Upper lobe of right lung (tissue), 1 donor: ENCODE measurements at regions of chr5 and their contacts with region 1.

Region 1: DNA sequence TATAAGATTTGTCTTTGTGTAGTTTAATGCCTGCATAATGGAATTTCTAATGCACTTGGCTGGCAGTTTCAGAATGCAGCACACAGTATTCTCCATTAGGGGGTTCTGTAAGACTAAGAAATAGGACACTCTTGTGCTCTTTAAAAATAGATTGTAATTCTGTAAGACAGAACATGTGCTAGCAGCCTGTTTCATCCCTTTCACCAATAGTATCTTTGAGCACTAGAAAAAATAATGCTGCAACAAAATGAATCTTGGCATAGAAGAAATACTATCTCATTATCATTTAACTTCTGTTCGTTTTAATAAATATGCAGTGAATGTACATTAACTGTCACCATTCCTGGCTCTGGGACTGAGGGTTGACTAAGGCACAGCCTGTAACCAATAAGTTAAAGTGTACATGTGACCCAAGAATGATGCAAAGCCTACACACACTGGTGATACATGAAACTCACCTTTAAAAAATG is 23.8 kb upstream of the ZNF622 start:
- DNase-seq: no peak
- ATAC-seq: peak; percentile 76
- H3K4me3 ChIP-seq: no peak overlapping the region
- H3K27ac ChIP-seq: no peak overlapping the region
- H3K4me1 ChIP-seq: no peaks in the 10 kb centered on the region
- H3K27me3 ChIP-seq: no peaks in the 10 kb centered on the region
- CTCF ChIP-seq: peak; percentile 70

Region 2: DNA sequence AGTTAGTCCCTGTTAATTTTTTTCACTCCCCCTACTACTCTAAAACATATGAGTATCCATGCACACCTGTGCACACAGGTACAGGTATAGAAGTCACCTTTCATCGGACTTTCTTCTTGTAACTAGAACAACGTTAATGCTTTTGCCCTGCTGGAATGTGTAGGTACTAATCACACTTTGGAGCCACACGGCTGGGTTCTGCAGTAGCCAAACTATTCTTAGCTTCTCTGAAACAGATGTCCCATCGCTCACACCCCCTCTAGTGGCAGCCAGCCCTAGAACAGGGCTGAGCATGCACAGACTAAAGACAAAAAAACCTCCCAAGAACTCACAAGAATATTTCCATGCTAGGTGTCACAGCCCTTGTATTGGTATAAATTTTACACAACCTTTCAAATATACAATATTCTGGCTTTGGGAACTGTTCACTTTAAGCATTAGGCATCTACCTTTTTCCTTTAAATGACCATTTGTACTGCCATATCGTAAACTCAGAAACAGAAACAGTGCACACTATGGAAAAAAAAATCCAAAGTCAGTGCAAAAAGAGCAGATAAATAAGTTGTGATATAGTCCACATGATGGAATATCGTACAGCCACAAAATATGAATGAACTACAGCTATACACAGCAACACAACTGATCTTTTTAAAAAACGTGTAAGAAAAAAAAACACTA is 63.4 kb after region 1 on chr5:
- intact Hi-C with region 1: loop called (anchors 10 kb)
- DNase-seq: peak; percentile 79
- ATAC-seq: peak; percentile 94
- H3K4me3 ChIP-seq: no peak overlapping the region
- H3K27ac ChIP-seq: no peak overlapping the region
- H3K4me1 ChIP-seq: no peaks in the 10 kb centered on the region
- H3K27me3 ChIP-seq: no peaks in the 10 kb centered on the region
- CTCF ChIP-seq: peak; percentile 74